ENCODE measurements at regions of chr4 and their contacts with region 1.

Region 1: DNA sequence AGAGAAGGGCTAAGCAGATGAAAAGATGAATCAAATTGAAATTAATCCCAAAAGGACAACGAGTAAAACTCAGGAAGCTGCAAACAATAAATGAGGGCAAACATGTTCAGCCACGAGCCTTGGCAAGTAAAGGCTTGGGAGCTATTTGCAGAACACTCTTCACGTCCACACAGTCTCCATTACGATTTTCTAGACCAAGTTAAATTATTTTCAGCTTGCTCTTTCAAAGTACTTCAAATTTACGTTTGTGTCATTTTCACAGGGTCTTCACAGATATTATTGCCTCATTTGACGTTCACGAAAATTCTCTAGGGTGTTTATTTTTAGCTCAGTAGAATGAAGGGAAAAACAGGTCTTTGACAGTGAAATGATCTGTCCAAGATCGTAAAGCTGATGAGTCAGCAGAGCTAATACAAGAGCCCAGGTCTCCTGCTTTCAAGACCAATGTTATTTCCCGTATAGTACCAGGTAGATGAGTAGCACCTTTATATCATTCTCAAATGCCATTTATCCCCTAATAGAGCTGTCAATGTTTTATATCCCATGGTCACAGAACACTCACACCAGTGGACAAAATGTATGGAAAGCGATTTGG is 20.9 kb downstream of the KLB start:
- DNase-seq: no peak
- ATAC-seq: no peak
- H3K4me3 ChIP-seq: no peak overlapping the region
- H3K27ac ChIP-seq: no peak overlapping the region
- H3K4me1 ChIP-seq: no peaks in the 10 kb centered on the region
- H3K27me3 ChIP-seq: no peaks in the 10 kb centered on the region
- CTCF ChIP-seq: no peak

Region 2: GRCh38 chr4:39808231-39808749 is 380.7 kb after region 1 on chr4:
- CTCF ChIA-PET with region 1: interaction called, 11 read pairs
- POLR2A ChIA-PET with region 1: no interaction called
- in situ Hi-C with region 1: no loop called
- intact Hi-C with region 1: no loop called
- DNase-seq: no peak
- ATAC-seq: no peak
- H3K4me3 ChIP-seq: no peak overlapping the region
- H3K27ac ChIP-seq: no peak overlapping the region
- H3K4me1 ChIP-seq: no peaks in the 10 kb centered on the region
- H3K27me3 ChIP-seq: no peaks in the 10 kb centered on the region
- CTCF ChIP-seq: no peak